ENCODE measurements at regions of chr17 and their contacts with region 1.

Region 1: DNA sequence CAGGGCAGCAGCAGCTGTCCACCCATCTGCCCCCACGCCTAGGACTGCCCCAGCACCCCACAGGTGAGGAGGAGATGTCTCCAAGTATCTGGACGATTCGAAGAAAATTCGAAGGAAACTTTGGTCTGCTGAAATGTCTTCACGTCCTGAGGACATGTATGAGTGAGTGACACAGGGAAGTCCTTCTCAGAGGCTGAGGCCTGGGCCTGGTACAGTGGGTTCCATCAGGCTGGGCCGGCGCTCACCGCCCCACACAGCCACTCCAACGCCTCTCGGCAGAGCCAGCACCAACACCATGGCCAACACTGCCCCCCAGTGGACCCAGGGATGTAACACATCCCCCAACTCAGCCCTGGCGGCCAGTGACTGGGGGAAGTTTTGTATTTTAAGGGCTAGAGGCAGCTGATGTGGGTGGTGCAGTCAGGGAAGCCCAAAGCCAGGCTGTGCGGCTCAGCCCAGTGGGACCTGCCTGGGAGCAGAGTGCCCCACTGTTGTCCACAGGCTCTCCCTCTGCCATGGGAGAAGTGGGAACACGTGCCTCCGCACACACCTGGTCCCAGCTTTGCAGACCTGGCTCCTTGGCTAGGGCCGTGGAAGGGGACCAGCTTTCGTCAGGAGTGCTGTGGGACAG is 55.8 kb upstream of the FASN start:
- DNase-seq: peak; percentile 76
- H3K4me3 Mint-ChIP-seq: no peak overlapping the region
- H3K27ac Mint-ChIP-seq: no peak overlapping the region
- H3K4me1 Mint-ChIP-seq: no peaks in the 10 kb centered on the region
- H3K27me3 Mint-ChIP-seq: no peaks in the 10 kb centered on the region

Region 2: DNA sequence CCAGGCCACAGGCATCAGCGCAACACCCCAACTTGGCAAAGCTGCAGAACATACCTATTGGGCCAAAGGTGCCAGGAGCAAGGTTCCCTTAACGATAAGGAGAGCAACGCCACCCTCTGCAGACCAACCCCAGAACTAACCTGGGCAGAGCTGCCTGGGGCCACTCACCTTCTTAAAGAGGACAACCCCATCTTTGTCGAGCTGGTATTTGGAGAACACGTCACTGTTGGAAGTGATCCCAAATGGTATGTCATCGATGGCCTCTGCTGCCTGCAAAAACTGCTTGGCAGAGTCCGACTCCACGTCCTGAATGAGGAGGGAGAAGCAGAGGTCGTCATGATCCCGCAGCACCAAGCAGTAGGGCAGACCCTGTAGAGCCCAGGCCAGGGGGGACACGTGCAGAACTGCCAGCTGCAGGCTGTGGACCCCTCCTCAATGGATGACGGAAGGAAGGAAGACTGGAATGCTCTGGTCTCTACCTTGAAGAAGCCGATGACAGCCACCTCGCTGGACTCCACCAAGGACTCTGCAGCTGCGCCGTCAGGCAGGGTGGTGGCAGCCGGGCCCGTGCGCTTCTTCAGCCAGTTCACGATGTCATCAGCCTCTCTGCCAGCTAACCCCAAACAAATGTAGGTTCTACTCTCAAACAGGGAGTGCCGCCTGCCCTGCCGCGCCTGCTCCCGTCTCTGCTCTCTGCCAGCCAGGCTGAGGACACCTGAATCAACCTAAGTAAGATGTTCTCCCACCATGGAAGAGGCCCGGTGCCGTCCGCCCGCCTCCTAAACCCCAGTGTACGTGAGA is 298.7 kb before region 1 on chr17:
- intact Hi-C with region 1: no loop called
- DNase-seq: no peak
- H3K4me3 Mint-ChIP-seq: no peak overlapping the region
- H3K27ac Mint-ChIP-seq: no peak overlapping the region
- H3K4me1 Mint-ChIP-seq: peaks cover 28% of the 10 kb centered on the region
- H3K27me3 Mint-ChIP-seq: no peaks in the 10 kb centered on the region

Region 3: GRCh38 chr17:81959362-81960129 is 194.3 kb before region 1 on chr17:
- intact Hi-C with region 1: loop called (anchors 2 kb)
- DNase-seq: peak; percentile 77
- H3K4me3 Mint-ChIP-seq: peak overlapping the region; percentile 61
- H3K27ac Mint-ChIP-seq: peak overlapping the region; percentile 75
- H3K4me1 Mint-ChIP-seq: no peaks in the 10 kb centered on the region
- H3K27me3 Mint-ChIP-seq: peaks cover 41% of the 10 kb centered on the region

Region 4: DNA sequence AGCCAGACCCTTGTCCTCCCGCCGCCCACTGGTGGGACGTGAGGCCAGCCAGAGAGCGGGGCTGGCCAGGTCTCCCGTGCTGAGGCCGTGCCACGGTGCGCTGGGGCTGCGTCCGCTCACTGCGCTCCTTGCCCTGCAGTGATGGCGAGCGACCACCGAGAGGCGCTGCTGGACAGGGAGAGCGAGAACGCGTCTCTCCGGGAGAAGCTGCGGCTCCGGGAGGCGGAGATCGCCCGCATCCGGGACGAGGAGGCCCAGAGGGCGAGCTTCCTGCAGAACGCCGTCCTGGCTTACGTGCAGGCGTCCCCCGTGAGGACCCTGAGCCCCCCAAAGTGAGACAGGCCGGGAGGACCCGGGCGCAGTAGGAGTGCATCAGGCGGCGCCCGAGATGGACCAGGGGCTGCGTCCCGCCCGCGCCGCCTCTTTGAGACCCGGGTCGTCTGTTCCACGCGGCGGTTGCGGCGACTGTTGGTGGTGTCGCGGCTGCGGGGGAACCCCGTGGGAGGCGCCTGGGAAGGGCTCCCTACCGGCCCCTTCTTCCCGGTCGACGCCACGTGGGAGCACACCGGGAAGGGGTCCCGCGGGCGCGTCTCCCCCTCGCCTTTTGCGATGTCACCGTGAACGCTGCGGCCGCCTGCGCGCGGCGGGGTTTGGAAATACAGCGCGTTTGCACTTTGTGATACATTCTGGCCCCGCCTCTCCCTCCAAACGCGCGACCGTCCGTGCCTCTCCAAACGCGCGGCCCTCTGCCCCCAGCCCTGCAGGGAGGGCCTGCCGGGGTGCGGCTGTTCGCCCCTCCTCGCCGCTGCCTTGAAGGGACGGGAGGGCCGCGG is 123.2 kb before region 1 on chr17:
- intact Hi-C with region 1: loop called (anchors 1 kb)
- DNase-seq: peak; percentile 84
- H3K4me3 Mint-ChIP-seq: peak overlapping the region; percentile 87
- H3K27ac Mint-ChIP-seq: peak overlapping the region; percentile 84
- H3K4me1 Mint-ChIP-seq: peaks cover 8% of the 10 kb centered on the region
- H3K27me3 Mint-ChIP-seq: no peaks in the 10 kb centered on the region

Region 5: GRCh38 chr17:82105882-82106687 is 47.8 kb before region 1 on chr17:
- intact Hi-C with region 1: loop called (anchors 1 kb)
- DNase-seq: peak; percentile 54
- H3K4me3 Mint-ChIP-seq: peak overlapping the region; percentile 88
- H3K27ac Mint-ChIP-seq: peak overlapping the region; percentile 96
- H3K4me1 Mint-ChIP-seq: peaks cover 11% of the 10 kb centered on the region
- H3K27me3 Mint-ChIP-seq: no peaks in the 10 kb centered on the region

Region 6: DNA sequence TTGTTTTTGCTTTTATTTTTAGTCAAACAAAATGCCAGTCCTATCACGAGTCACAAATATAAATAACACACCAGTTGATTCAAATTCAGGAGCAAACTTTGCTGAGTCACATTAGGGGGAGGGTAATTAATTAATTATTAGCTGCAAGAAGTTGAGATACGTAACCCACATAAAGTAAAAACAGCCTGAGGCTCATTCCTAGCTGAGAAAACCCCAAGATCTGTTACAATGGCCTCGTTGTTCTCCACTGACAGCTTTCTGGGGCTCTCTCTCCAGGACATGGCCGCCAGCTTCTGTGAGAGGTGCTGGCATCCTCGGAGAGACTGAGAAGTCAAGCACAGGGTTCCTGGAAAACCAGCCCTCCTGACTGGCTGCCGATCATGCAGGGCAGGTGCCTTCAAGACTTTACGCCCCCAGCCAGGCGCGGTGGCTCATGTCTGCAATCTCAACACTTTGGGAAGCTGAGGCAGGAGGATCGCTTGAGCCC is 533.6 kb after region 1 on chr17:
- intact Hi-C with region 1: no loop called
- DNase-seq: no peak
- H3K4me3 Mint-ChIP-seq: no peak overlapping the region
- H3K27ac Mint-ChIP-seq: no peak overlapping the region
- H3K4me1 Mint-ChIP-seq: peaks cover 7% of the 10 kb centered on the region
- H3K27me3 Mint-ChIP-seq: no peaks in the 10 kb centered on the region